ENCODE measurements at regions of chr5 and their contacts with region 1.

Region 1: GRCh38 chr5:40652441-40653220 is 27.1 kb upstream of the PTGER4 start:
- DNase-seq: no peak
- ATAC-seq: peak; percentile 10
- H3K4me3 Mint-ChIP-seq: peak overlapping the region; percentile 39
- H3K27ac Mint-ChIP-seq: no peak overlapping the region
- H3K4me1 Mint-ChIP-seq: peaks cover 36% of the 10 kb centered on the region
- H3K27me3 Mint-ChIP-seq: no peaks in the 10 kb centered on the region
- CTCF ChIP-seq: no peak

Region 2: GRCh38 chr5:40669606-40670390 is 17.2 kb after region 1 on chr5:
- CTCF ChIA-PET with region 1: no interaction called
- POLR2A ChIA-PET with region 1: no interaction called
- intact Hi-C with region 1: loop called (anchors 2 kb)
- DNase-seq: no peak
- ATAC-seq: no peak
- H3K4me3 Mint-ChIP-seq: no peak overlapping the region
- H3K27ac Mint-ChIP-seq: no peak overlapping the region
- H3K4me1 Mint-ChIP-seq: peaks cover 19% of the 10 kb centered on the region
- H3K27me3 Mint-ChIP-seq: no peaks in the 10 kb centered on the region
- CTCF ChIP-seq: no peak

Region 3: GRCh38 chr5:40813698-40814281 is 161.2 kb after region 1 on chr5:
- CTCF ChIA-PET with region 1: no interaction called
- POLR2A ChIA-PET with region 1: no interaction called
- intact Hi-C with region 1: no loop called
- DNase-seq: no peak
- ATAC-seq: no peak
- H3K4me3 Mint-ChIP-seq: no peak overlapping the region
- H3K27ac Mint-ChIP-seq: no peak overlapping the region
- H3K4me1 Mint-ChIP-seq: no peaks in the 10 kb centered on the region
- H3K27me3 Mint-ChIP-seq: no peaks in the 10 kb centered on the region
- CTCF ChIP-seq: no peak

Measured in activated B cell treated with CpG ODN at 0.5 μM for 24 hours (primary cell).